ENCODE measurements at regions of chr1 and their contacts with region 1.

Region 1: GRCh38 chr1:145845514-145846161 is at the start of gene NUDT17:
- DNase-seq: peak; percentile 41 to 87 (median 69)
- ATAC-seq: peak; percentile 80 to 84 (median 84)
- H3K4me3 ChIP-seq: peak within 1 kb of the TSS; percentile 69 to 75
- H3K4me3 Mint-ChIP-seq: no peak within 1 kb of the TSS
- H3K27ac ChIP-seq: peak within 1 kb of the TSS; percentile 26
- H3K27ac Mint-ChIP-seq: peak within 1 kb of the TSS in 1 of 2 donors; percentile 71
- H3K4me1 ChIP-seq: peaks cover 7 to 19% of the 10 kb centered on the region in 2 experiments
- H3K4me1 Mint-ChIP-seq: peaks cover 7 to 14% (median 12%) of the 10 kb centered on the region in 3 donors
- H3K27me3 ChIP-seq: no peaks in the 10 kb centered on the region
- H3K27me3 Mint-ChIP-seq: no peaks in the 10 kb centered on the region
- total RNA-seq, gene NUDT17: 2.8 to 7.6 (median 6.3) TPM

Region 2: DNA sequence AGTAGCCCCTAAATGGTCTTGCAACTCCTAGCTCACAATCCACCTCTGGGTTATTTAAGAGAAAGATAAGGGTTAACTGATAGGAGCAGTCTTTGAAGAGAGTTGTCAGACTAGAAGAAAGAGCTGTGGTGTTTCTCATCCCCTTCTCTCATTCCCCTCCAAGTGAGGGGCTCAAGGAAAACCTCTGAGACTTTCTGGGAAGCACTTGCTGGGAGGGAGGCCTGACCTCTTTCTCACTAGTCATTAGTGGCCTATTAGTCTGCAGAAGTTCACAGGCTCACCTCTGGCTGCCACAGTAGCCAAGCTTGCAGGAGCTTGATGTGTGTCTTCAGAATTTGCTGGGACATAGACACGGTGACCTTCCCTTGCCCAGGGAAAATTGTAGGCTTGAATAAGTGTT is 244.0 kb before region 1 on chr1:
- CTCF ChIA-PET with region 1: no interaction called
- POLR2A ChIA-PET with region 1: no interaction called
- DNase-seq: no peak
- ATAC-seq: no peak
- H3K4me3 ChIP-seq: no peak overlapping the region
- H3K4me3 Mint-ChIP-seq: no peak overlapping the region
- H3K27ac ChIP-seq: no peak overlapping the region
- H3K27ac Mint-ChIP-seq: no peak overlapping the region
- H3K4me1 ChIP-seq: no peaks in the 10 kb centered on the region
- H3K4me1 Mint-ChIP-seq: no peaks in the 10 kb centered on the region
- H3K27me3 ChIP-seq: no peaks in the 10 kb centered on the region
- H3K27me3 Mint-ChIP-seq: peaks cover 0 to 8% of the 10 kb centered on the region in 2 donors

Region 3: GRCh38 chr1:145782166-145783099 is 63.2 kb before region 1 on chr1:
- CTCF ChIA-PET with region 1: no interaction called
- POLR2A ChIA-PET with region 1: no interaction called
- DNase-seq: no peak
- ATAC-seq: no peak
- H3K4me3 ChIP-seq: no peak overlapping the region
- H3K4me3 Mint-ChIP-seq: no peak overlapping the region
- H3K27ac ChIP-seq: no peak overlapping the region
- H3K27ac Mint-ChIP-seq: no peak overlapping the region
- H3K4me1 ChIP-seq: peaks cover 0 to 15% of the 10 kb centered on the region in 2 experiments
- H3K4me1 Mint-ChIP-seq: peaks cover 21 to 30% (median 24%) of the 10 kb centered on the region in 3 donors
- H3K27me3 ChIP-seq: no peaks in the 10 kb centered on the region
- H3K27me3 Mint-ChIP-seq: no peaks in the 10 kb centered on the region

Region 4: DNA sequence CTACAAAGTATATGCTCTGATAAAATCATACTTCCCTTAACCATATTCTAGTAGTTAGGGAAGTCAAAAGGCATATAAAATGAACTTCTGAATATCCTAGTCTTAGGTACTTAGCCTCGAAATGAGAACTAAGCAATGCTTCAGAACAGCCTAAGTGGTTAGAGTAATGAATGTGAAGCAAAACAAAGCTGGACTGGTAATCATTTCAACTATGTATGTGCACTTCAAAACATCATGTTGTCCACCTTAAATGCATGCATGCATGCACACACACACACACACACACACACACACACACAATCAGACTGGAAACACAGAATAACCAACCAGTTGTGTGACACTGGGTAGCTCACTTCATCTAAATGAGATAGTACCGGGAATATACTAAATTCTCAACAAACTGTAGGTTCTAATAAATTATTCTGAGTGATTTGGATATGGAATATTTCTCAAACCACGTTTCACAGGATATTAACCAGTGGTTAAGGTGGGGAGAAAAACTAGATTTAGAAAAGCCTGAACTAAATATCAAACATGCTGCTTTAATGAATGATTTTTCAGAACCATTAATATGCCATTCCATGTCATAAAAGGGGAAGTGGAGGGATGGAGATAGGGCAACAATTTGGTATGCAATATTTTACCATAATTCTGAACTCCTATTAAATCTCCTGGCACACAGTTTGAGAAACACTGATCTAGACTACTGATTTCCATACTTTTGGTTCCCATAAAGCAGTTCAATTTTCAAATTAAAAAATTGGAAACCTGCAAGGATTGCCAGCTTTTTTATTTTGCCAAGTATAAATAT is 41.2 kb before region 1 on chr1:
- CTCF ChIA-PET with region 1: interaction called in 1 of 2 experiments, 10 read pairs
- POLR2A ChIA-PET with region 1: no interaction called
- DNase-seq: no peak
- ATAC-seq: no peak
- H3K4me3 ChIP-seq: no peak overlapping the region
- H3K4me3 Mint-ChIP-seq: no peak overlapping the region
- H3K27ac ChIP-seq: no peak overlapping the region
- H3K27ac Mint-ChIP-seq: no peak overlapping the region
- H3K4me1 ChIP-seq: peaks cover 2 to 3% of the 10 kb centered on the region in 2 experiments
- H3K4me1 Mint-ChIP-seq: peaks cover 49 to 63% (median 55%) of the 10 kb centered on the region in 3 donors
- H3K27me3 ChIP-seq: no peaks in the 10 kb centered on the region
- H3K27me3 Mint-ChIP-seq: no peaks in the 10 kb centered on the region

Region 5: GRCh38 chr1:145858894-145859490 is 13.4 kb after region 1 on chr1 and contains the start of gene PIAS3:
- CTCF ChIA-PET with region 1: interaction called, 33 to 52 read pairs
- POLR2A ChIA-PET with region 1: interaction called in 1 of 2 experiments, 6 read pairs
- DNase-seq: peak; percentile 56 to 85 (median 73)
- ATAC-seq: peak; percentile 86 to 89 (median 87)
- H3K4me3 ChIP-seq: peak within 1 kb of the TSS; percentile 93 to 96
- H3K4me3 Mint-ChIP-seq: peak within 1 kb of the TSS; percentile 92 to 96 (median 94)
- H3K27ac ChIP-seq: peak within 1 kb of the TSS; percentile 63
- H3K27ac Mint-ChIP-seq: peak within 1 kb of the TSS; percentile 84 to 90
- H3K4me1 ChIP-seq: peaks cover 2 to 21% of the 10 kb centered on the region in 2 experiments
- H3K4me1 Mint-ChIP-seq: peaks cover 12 to 19% (median 18%) of the 10 kb centered on the region in 3 donors
- H3K27me3 ChIP-seq: no peaks in the 10 kb centered on the region
- H3K27me3 Mint-ChIP-seq: no peaks in the 10 kb centered on the region
- total RNA-seq, gene PIAS3: 22.1 to 28.3 (median 26.8) TPM

Region 6: GRCh38 chr1:145957443-145958319 is 112.0 kb after region 1 on chr1 and contains the start of gene LIX1L:
- CTCF ChIA-PET with region 1: interaction called in 1 of 2 experiments, 11 read pairs
- POLR2A ChIA-PET with region 1: no interaction called
- DNase-seq: peak; percentile 86 to 97 (median 94)
- ATAC-seq: peak; percentile 88 to 90 (median 89)
- H3K4me3 ChIP-seq: peak within 1 kb of the TSS; percentile 80 to 84
- H3K4me3 Mint-ChIP-seq: peak within 1 kb of the TSS; percentile 89 to 92 (median 90)
- H3K27ac ChIP-seq: peak within 1 kb of the TSS; percentile 84
- H3K27ac Mint-ChIP-seq: peak within 1 kb of the TSS; percentile 89 to 95
- H3K4me1 ChIP-seq: peaks cover 43 to 57% of the 10 kb centered on the region in 2 experiments
- H3K4me1 Mint-ChIP-seq: peaks cover 66 to 82% (median 71%) of the 10 kb centered on the region in 3 donors
- H3K27me3 ChIP-seq: no peaks in the 10 kb centered on the region
- H3K27me3 Mint-ChIP-seq: no peaks in the 10 kb centered on the region
- total RNA-seq, gene LIX1L: 43.4 to 74.4 (median 64.2) TPM

Region 7: DNA sequence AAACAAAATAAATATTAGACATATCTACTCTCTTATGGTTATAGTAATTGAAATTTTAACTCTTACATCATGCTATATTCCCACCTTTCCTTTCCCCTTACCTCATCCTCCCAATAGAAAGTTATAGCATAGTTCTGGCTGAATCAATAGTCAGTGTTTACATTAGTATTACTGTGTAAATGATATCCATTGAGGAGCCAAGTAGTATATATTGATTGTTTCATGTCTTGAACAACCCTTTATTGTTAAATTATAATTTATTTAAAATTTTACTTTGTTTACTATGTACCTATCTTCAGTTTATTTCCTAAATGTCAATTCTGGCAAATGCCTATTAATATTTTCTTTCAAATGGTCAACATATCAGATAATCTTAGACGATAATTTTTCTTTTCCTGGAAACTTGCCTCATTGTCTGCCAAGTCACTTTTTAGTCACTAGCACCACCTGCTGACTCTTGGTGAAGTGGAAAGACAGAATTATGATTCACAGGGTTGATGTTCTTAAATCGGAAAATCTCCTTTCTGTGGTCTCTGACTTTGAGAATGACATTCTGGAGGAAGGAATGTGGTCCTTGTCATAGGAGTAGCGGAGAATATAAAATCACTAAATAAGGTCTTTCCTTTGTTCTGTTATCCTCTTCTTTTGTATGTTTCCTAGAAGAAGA is 167.2 kb after region 1 on chr1:
- CTCF ChIA-PET with region 1: interaction called, 4 to 27 read pairs
- POLR2A ChIA-PET with region 1: no interaction called
- DNase-seq: peak in 29 of 35 experiments; percentile 29 to 86 (median 55)
- ATAC-seq: peak in 3 of 4 experiments; percentile 59 to 79 (median 73)
- H3K4me3 ChIP-seq: no peak overlapping the region
- H3K4me3 Mint-ChIP-seq: no peak overlapping the region
- H3K27ac ChIP-seq: no peak overlapping the region
- H3K27ac Mint-ChIP-seq: no peak overlapping the region
- H3K4me1 ChIP-seq: peaks cover 0 to 1% of the 10 kb centered on the region in 2 experiments
- H3K4me1 Mint-ChIP-seq: peaks cover 6 to 9% (median 7%) of the 10 kb centered on the region in 3 donors
- H3K27me3 ChIP-seq: peaks cover 0 to 4% of the 10 kb centered on the region in 2 experiments
- H3K27me3 Mint-ChIP-seq: peaks cover 3 to 8% of the 10 kb centered on the region in 2 donors

Measured in T-cell (primary cell).